Heart left ventricle (tissue), 16 donors: ENCODE measurements at regions of chr1 and their contacts with region 1.

Region 1: DNA sequence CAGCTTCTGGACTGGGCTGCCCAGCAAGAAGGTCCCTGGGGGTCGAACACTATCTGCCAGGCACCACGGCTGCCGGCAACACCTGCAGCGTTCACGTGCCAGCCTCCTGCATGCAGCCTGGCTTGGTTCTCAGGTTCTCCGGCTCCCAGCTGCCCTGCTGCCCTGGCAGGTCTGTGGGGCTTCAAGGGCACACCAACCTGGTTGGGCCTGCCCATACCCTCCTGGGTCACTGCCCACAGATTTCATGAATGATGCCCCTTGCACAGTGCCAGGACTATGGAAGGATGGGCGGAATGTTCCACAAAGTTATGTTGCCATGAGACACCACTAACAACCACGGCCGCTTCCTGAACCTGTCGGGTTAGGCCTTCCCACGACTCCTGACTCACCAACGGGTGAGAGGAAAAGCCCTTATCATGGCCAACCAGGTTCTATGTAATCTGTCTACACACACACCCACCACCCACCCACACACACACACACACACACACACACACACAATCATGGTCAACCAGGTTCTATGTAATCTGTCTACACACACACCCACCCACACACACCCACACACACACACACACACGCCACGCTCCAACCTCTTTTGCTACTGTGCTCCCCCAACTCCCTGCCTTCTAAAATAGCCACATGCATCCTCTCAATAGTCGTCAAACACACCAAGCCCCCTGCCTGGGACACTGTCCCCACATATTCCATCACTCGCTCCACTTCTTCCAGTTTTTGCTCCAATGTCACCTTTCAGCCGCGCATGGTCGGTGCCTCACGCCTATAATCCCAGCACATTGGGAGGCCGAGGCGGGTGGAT is 32.2 kb downstream of the HSPG2 start:
- DNase-seq: peak in 3 of 5 donors; percentile 54 to 89 (median 78)
- ATAC-seq: peak; percentile 48 to 62 (median 54)
- H3K4me3 ChIP-seq: no peak overlapping the region
- H3K27ac ChIP-seq: peak overlapping the region; percentile 75 to 98 (median 90)
- H3K4me1 ChIP-seq: peaks cover 36 to 100% (median 98%) of the 10 kb centered on the region in 12 donors
- H3K27me3 ChIP-seq: no peaks in the 10 kb centered on the region
- CTCF ChIP-seq: no peak
- POLR2A ChIP-seq: no peak

Region 2: GRCh38 chr1:21937372-21938221 is 32.7 kb after region 1 on chr1:
- intact Hi-C with region 1: loop called in 4 of 10 experiments (anchors 2 to 5 kb)
- DNase-seq: peak; percentile 87 to 94 (median 90)
- ATAC-seq: peak; percentile 23 to 81 (median 66)
- H3K4me3 ChIP-seq: peak overlapping the region; percentile 14 to 98 (median 50)
- H3K27ac ChIP-seq: peak overlapping the region; percentile 57 to 91 (median 88)
- H3K4me1 ChIP-seq: peaks cover 20 to 86% (median 62%) of the 10 kb centered on the region in 12 donors
- H3K27me3 ChIP-seq: no peaks in the 10 kb centered on the region
- CTCF ChIP-seq: no peak
- POLR2A ChIP-seq: peak in 1 of 2 donors; percentile 69